GM10248 (cell line): ENCODE measurements at regions of chr17 and their contacts with region 1.

Region 1: GRCh38 chr17:60372790-60373483 is 19.0 kb downstream of the USP32 start:
- DNase-seq: no peak
- CTCF ChIP-seq: no peak

Region 2: DNA sequence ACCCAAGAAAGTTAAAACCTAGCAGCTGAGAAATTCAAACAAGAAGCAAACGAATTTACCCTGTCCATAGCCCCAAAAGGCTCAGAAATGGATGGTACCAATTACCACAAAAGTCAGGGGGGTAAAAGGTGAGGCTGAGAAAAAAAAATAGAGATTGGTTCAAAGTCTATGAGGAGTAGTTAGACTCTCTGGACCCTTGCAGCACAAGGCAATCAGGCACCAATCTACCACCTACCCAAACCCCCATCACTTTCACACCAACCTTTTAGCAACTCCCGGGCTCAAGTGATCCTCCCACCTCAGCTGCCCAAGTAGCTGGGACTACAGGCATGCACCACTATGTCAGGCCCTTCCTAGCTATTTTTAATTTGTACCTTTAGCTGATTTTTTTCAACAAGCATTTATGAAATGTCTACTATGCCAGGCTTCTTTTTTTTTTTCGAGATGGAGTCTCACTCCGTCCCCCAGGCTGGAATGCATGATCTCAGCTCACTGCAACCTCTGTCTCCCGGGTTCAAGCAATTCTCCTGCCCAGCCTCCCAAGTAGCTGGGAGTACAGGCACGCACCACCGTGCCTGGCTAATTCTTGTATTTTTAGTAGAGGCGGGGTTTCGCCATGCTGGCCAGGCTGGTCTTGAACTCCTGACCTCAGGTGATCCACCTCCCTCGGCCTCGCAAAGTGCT is 21.8 kb before region 1 on chr17:
- CTCF ChIA-PET with region 1: no interaction called
- POLR2A ChIA-PET with region 1: no interaction called
- DNase-seq: no peak
- CTCF ChIP-seq: no peak

Region 3: GRCh38 chr17:60388742-60389141 is 15.8 kb after region 1 on chr17:
- CTCF ChIA-PET with region 1: interaction called, 11 read pairs
- POLR2A ChIA-PET with region 1: no interaction called
- DNase-seq: no peak
- CTCF ChIP-seq: no peak